Ascending aorta (tissue), 2 donors: ENCODE measurements at regions of chr16 and their contacts with region 1.

Region 1: GRCh38 chr16:48535831-48536613 is 74.0 kb downstream of the N4BP1 start:
- DNase-seq: peak in 1 of 2 donors; percentile 79
- H3K4me3 ChIP-seq: no peak overlapping the region
- H3K27ac ChIP-seq: peak overlapping the region; percentile 78 to 86
- H3K4me1 ChIP-seq: peaks cover 18 to 31% of the 10 kb centered on the region in 2 donors
- H3K27me3 ChIP-seq: no peaks in the 10 kb centered on the region
- CTCF ChIP-seq: no peak

Region 2: GRCh38 chr16:48373258-48374029 is 162.6 kb before region 1 on chr16:
- intact Hi-C with region 1: loop called (anchors 5 kb)
- DNase-seq: no peak
- H3K4me3 ChIP-seq: no peak overlapping the region
- H3K27ac ChIP-seq: peak overlapping the region in 1 of 2 donors; percentile 29
- H3K4me1 ChIP-seq: peaks cover 6 to 35% of the 10 kb centered on the region in 2 donors
- H3K27me3 ChIP-seq: no peaks in the 10 kb centered on the region
- CTCF ChIP-seq: no peak